K562 (cell line): ENCODE measurements at regions of chr3 and their contacts with region 1.

Region 1: GRCh38 chr3:33131331-33132018 is 17.7 kb downstream of the CRTAP start:
- DNase-seq: peak; percentile 71 to 78 (median 74)
- ATAC-seq: peak; percentile 94
- H3K4me3 ChIP-seq: no peak overlapping the region
- H3K27ac ChIP-seq: no peak overlapping the region
- H3K4me1 ChIP-seq: no peaks in the 10 kb centered on the region
- H3K27me3 ChIP-seq: no peaks in the 10 kb centered on the region
- CTCF ChIP-seq: peak; percentile 76 to 91 (median 82)
- EP300 ChIP-seq: no peak
- POLR2A ChIP-seq: no peak
- RAD21 ChIP-seq: peak; percentile 85 to 92

Region 2: DNA sequence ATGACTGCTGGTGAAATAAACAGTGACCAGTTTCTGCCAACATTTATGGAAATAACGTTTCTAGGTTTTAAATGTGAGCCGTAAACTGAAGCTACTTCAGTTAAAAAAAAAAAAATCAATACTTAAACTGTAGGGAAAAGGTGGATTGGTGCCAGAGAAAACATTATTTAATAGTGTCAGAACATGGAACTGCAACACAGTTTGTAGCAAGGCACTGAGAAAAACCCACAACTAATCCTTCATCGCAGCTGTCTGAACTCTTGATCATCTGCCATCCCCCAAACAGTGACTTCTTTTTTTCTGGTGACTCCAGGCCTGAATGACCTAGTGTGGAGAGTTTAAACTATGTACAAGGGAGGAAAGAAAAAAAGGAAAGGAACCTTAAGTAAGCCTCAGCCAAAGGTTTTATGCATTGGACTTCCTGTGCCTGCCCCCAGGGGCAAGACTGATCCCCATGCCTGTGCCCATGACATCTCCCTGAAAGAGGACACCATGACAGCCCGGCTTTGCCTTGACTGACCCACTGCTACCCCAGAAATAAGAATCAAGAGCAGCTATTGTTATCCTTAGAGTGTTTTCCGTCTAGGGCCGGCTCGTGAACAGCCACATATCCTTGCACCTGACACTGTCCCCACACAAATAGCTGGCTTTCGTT is 15.4 kb after region 1 on chr3:
- CTCF ChIA-PET with region 1: interaction called, 3 read pairs
- POLR2A ChIA-PET with region 1: interaction called, 10 read pairs
- in situ Hi-C with region 1: no loop called
- intact Hi-C with region 1: no loop called
- DNase-seq: no peak
- ATAC-seq: peak; percentile 19
- H3K4me3 ChIP-seq: no peak overlapping the region
- H3K27ac ChIP-seq: no peak overlapping the region
- H3K4me1 ChIP-seq: no peaks in the 10 kb centered on the region
- H3K27me3 ChIP-seq: peaks cover 3 to 8% of the 10 kb centered on the region in 2 experiments; a peak in 3 of 5 replicates
- CTCF ChIP-seq: no peak
- EP300 ChIP-seq: no peak
- POLR2A ChIP-seq: no peak
- RAD21 ChIP-seq: no peak

Region 3: DNA sequence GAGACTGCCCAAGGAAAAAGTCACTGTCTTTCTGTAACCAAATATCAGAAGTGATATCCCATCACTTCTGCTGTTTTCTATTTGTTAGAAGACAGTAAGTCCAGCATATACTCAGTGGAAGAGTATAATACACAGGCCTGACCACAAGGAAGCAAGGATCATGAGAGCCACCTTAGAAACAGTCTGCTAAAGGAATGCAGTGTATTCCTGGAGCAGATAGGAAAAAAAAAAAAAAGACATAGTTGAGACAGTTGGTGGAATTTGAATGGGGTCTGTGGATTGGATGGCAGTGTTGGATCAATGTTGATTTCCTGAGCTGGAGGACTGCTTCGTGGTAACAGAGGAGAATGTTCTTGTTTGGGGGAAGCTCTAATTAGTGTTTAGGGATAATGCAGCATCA is 119.2 kb after region 1 on chr3:
- CTCF ChIA-PET with region 1: no interaction called
- POLR2A ChIA-PET with region 1: no interaction called
- in situ Hi-C with region 1: no loop called
- intact Hi-C with region 1: loop called (anchors 5 kb)
- DNase-seq: no peak
- ATAC-seq: no peak
- H3K4me3 ChIP-seq: no peak overlapping the region
- H3K27ac ChIP-seq: no peak overlapping the region
- H3K4me1 ChIP-seq: no peaks in the 10 kb centered on the region
- H3K27me3 ChIP-seq: no peaks in the 10 kb centered on the region
- CTCF ChIP-seq: no peak
- EP300 ChIP-seq: no peak
- POLR2A ChIP-seq: no peak
- RAD21 ChIP-seq: no peak

Region 4: DNA sequence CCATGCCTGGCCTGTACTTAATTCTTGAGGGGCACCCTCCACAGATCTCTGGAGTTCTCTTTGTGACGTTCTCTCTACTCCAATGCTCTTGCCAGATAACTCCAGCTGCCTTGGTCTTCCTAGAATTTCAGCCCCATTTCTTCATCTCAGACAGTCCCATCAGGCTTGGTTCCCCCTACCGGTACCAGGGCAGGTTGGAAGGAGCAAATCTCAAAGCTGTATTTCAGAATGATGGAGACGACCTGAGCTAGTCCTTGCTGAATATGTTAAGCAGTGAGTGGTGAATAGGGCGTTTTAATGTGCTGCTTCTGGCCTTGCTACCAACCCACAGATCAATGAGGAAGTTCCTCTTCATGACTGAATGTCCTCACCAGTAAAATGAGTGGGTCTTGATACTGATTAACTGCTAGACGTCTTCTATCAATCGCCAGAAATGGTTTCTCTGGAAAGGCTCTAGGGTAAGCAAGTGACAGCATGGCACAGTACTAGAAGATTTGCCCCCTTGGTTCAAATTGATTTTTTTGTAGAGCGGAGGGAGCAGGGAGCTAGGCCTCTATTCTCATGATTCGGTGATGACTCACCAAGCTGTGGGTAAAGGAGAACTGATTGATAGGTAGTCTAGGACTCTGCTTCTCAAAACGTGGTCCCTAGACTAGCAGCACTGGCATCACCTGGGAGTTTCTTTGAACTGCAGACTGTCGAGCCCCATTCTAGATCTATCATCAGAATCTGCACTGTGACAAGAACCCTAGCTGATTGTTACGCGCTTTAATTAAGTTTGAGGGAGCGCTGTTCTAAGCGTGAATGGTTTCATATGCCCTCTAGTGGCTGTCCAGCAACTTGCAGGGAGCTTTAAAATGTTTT is 241.0 kb after region 1 on chr3:
- CTCF ChIA-PET with region 1: interaction called, 50 read pairs
- POLR2A ChIA-PET with region 1: interaction called, 14 read pairs
- in situ Hi-C with region 1: loop called (anchors 5 kb)
- intact Hi-C with region 1: loop called (anchors 1 kb)
- DNase-seq: peak; percentile 56 to 71 (median 68)
- ATAC-seq: peak; percentile 81
- H3K4me3 ChIP-seq: no peak overlapping the region
- H3K27ac ChIP-seq: no peak overlapping the region
- H3K4me1 ChIP-seq: no peaks in the 10 kb centered on the region; a peak in 2 of 5 replicates
- H3K27me3 ChIP-seq: no peaks in the 10 kb centered on the region
- CTCF ChIP-seq: peak; percentile 90 to 97 (median 95)
- EP300 ChIP-seq: no peak
- POLR2A ChIP-seq: no peak
- RAD21 ChIP-seq: peak; percentile 91 to 96

Region 5: GRCh38 chr3:33447958-33448357 is 316.5 kb after region 1 on chr3:
- CTCF ChIA-PET with region 1: no interaction called
- POLR2A ChIA-PET with region 1: no interaction called
- in situ Hi-C with region 1: no loop called
- intact Hi-C with region 1: no loop called
- DNase-seq: no peak
- ATAC-seq: no peak
- H3K4me3 ChIP-seq: no peak overlapping the region
- H3K27ac ChIP-seq: no peak overlapping the region
- H3K4me1 ChIP-seq: no peaks in the 10 kb centered on the region; a peak in 1 of 5 replicates
- H3K27me3 ChIP-seq: no peaks in the 10 kb centered on the region
- CTCF ChIP-seq: no peak
- EP300 ChIP-seq: no peak
- POLR2A ChIP-seq: no peak
- RAD21 ChIP-seq: no peak

Region 6: GRCh38 chr3:33636125-33636850 is 504.8 kb after region 1 on chr3:
- CTCF ChIA-PET with region 1: no interaction called
- POLR2A ChIA-PET with region 1: no interaction called
- in situ Hi-C with region 1: no loop called
- intact Hi-C with region 1: loop called (anchors 10 kb)
- DNase-seq: peak; percentile 33 to 72 (median 40)
- ATAC-seq: peak; percentile 80
- H3K4me3 ChIP-seq: no peak overlapping the region
- H3K27ac ChIP-seq: no peak overlapping the region
- H3K4me1 ChIP-seq: no peaks in the 10 kb centered on the region
- H3K27me3 ChIP-seq: no peaks in the 10 kb centered on the region
- CTCF ChIP-seq: peak; percentile 60 to 83 (median 62); a peak in 5 of 6 replicates
- EP300 ChIP-seq: no peak
- POLR2A ChIP-seq: no peak
- RAD21 ChIP-seq: peak; percentile 91 to 94

Region 7: GRCh38 chr3:33717866-33718594 is 586.6 kb after region 1 on chr3 and contains the start of gene CLASP2:
- CTCF ChIA-PET with region 1: interaction called, 6 read pairs
- POLR2A ChIA-PET with region 1: no interaction called
- in situ Hi-C with region 1: no loop called
- intact Hi-C with region 1: loop called (anchors 5 kb)
- DNase-seq: peak; percentile 93 to 96 (median 94)
- ATAC-seq: peak; percentile 92
- H3K4me3 ChIP-seq: peak within 1 kb of the TSS; percentile 75
- H3K27ac ChIP-seq: peak within 1 kb of the TSS; percentile 88
- H3K4me1 ChIP-seq: peaks cover 5 to 14% of the 10 kb centered on the region in 2 experiments; a peak in 4 of 5 replicates
- H3K27me3 ChIP-seq: no peaks in the 10 kb centered on the region
- CTCF ChIP-seq: peak in 1 of 3 experiments; percentile 1; a peak in 1 of 6 replicates
- EP300 ChIP-seq: peak; percentile 40
- POLR2A ChIP-seq: peak; percentile 93
- RAD21 ChIP-seq: 0 out of 4 replicates have a peak, but pooled peaks of 1 of the 2 experiments have one; percentile 8
- polyA plus RNA-seq, gene CLASP2: 13.5 to 17.4 TPM